GM12878 (cell line): ENCODE measurements at regions of chr2 and their contacts with region 1.

Region 1: DNA sequence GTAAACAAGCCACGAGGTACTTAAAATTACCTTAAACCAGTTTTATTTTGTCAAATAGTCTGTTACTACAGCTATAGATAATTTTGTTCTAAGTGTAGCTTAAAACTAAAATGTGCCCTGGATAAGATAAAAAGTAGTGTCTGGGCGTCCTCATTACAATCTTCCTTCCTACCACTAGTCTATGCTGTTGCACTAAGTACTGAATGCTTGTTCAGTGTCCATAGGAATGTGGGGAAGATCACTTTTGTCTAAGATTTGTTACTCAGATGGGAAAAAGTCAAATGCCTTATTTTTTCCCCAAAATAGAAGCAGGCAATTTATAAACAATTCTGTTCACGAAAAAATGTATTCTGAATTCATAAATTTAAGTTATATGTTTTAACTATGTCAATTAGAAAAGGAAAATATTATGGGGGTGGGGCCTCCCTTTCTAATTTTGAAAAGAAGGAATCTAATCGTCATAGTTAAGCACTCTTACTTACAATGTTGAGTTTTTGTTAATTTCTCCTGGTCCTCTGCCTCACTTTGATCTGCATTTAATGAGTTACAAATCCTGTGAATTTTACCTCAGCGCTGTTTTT is 140.4 kb upstream of the VRK2 start:
- DNase-seq: no peak
- ATAC-seq: peak; percentile 78
- H3K4me3 ChIP-seq: no peak overlapping the region
- H3K27ac ChIP-seq: no peak overlapping the region
- H3K4me1 ChIP-seq: peaks cover 11% of the 10 kb centered on the region; the same call in 1 of the 2 replicates
- H3K27me3 ChIP-seq: no peaks in the 10 kb centered on the region
- CTCF ChIP-seq: peak; percentile 86 to 90 (median 89); a peak in 5 of 6 replicates
- EP300 ChIP-seq: no peak
- POLR2A ChIP-seq: no peak
- RAD21 ChIP-seq: peak; percentile 100

Region 2: DNA sequence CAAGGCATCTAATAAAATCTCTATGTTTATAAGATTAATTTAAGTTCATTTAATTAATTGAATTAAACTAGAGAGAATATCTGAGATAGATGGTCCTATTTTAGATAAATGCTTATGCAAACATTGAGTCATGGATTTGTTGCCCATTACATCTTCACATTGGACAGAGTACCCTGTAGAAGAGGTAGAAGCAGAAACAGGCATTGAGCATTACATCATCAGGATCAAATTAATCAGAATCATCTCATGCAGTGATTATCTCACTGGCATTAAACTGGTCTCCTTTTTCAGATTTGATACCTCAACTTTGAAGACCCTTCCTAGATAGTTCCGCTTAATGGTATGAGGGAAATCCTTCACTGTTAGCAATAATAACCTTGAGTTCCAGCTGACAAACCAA is 329.3 kb before region 1 on chr2:
- CTCF ChIA-PET with region 1: no interaction called
- POLR2A ChIA-PET with region 1: no interaction called
- RAD21 ChIA-PET with region 1: no interaction called
- SMC1A ChIA-PET with region 1: no interaction called
- in situ Hi-C with region 1: no loop called
- intact Hi-C with region 1: no loop called
- DNase-seq: no peak
- ATAC-seq: no peak
- H3K4me3 ChIP-seq: no peak overlapping the region
- H3K27ac ChIP-seq: no peak overlapping the region
- H3K4me1 ChIP-seq: no peaks in the 10 kb centered on the region
- H3K27me3 ChIP-seq: no peaks in the 10 kb centered on the region
- CTCF ChIP-seq: no peak
- EP300 ChIP-seq: no peak
- POLR2A ChIP-seq: no peak
- RAD21 ChIP-seq: no peak

Region 3: GRCh38 chr2:57881998-57882884 is 24.0 kb before region 1 on chr2:
- CTCF ChIA-PET with region 1: interaction called, 16 read pairs
- POLR2A ChIA-PET with region 1: interaction called, 8 read pairs
- RAD21 ChIA-PET with region 1: interaction called, 74 read pairs
- SMC1A ChIA-PET with region 1: interaction called, 18 read pairs
- in situ Hi-C with region 1: no loop called
- intact Hi-C with region 1: no loop called
- DNase-seq: no peak
- ATAC-seq: peak; percentile 11
- H3K4me3 ChIP-seq: peak overlapping the region; percentile 47; the same call in 1 of the 2 replicates
- H3K27ac ChIP-seq: peak overlapping the region; percentile 74
- H3K4me1 ChIP-seq: peaks cover 39% of the 10 kb centered on the region
- H3K27me3 ChIP-seq: no peaks in the 10 kb centered on the region
- CTCF ChIP-seq: no peak
- EP300 ChIP-seq: no peak
- POLR2A ChIP-seq: no peak
- RAD21 ChIP-seq: no peak

Region 4: GRCh38 chr2:57990118-57990725 is 84.0 kb after region 1 on chr2:
- CTCF ChIA-PET with region 1: interaction called, 4 read pairs
- POLR2A ChIA-PET with region 1: interaction called, 4 read pairs
- RAD21 ChIA-PET with region 1: interaction called, 20 read pairs
- SMC1A ChIA-PET with region 1: interaction called, 6 read pairs
- in situ Hi-C with region 1: no loop called
- intact Hi-C with region 1: no loop called
- DNase-seq: peak; percentile 30
- ATAC-seq: peak; percentile 96
- H3K4me3 ChIP-seq: no peak overlapping the region
- H3K27ac ChIP-seq: no peak overlapping the region
- H3K4me1 ChIP-seq: no peaks in the 10 kb centered on the region
- H3K27me3 ChIP-seq: no peaks in the 10 kb centered on the region
- CTCF ChIP-seq: no peak
- EP300 ChIP-seq: 0 out of 4 replicates have a peak, but pooled peaks of 1 of the 2 experiments have one; percentile 35
- POLR2A ChIP-seq: no peak
- RAD21 ChIP-seq: 0 out of 2 replicates have a peak, but pooled peaks have one; percentile 0

Region 5: GRCh38 chr2:58006256-58006951 is 100.2 kb after region 1 on chr2:
- CTCF ChIA-PET with region 1: no interaction called
- POLR2A ChIA-PET with region 1: no interaction called
- RAD21 ChIA-PET with region 1: no interaction called
- SMC1A ChIA-PET with region 1: no interaction called
- in situ Hi-C with region 1: no loop called
- intact Hi-C with region 1: no loop called
- DNase-seq: no peak
- ATAC-seq: peak; percentile 94
- H3K4me3 ChIP-seq: no peak overlapping the region
- H3K27ac ChIP-seq: peak overlapping the region; percentile 13; the same call in 1 of the 2 replicates
- H3K4me1 ChIP-seq: no peaks in the 10 kb centered on the region
- H3K27me3 ChIP-seq: no peaks in the 10 kb centered on the region
- CTCF ChIP-seq: no peak
- EP300 ChIP-seq: no peak
- POLR2A ChIP-seq: no peak
- RAD21 ChIP-seq: no peak

Region 6: GRCh38 chr2:58046585-58047372 is 140.5 kb after region 1 on chr2 and contains the start of gene VRK2:
- CTCF ChIA-PET with region 1: interaction called, 15 read pairs
- POLR2A ChIA-PET with region 1: interaction called, 31 read pairs
- RAD21 ChIA-PET with region 1: interaction called, 54 read pairs
- SMC1A ChIA-PET with region 1: interaction called, 64 read pairs
- in situ Hi-C with region 1: no loop called
- intact Hi-C with region 1: loop called (anchors 1 kb)
- DNase-seq: peak; percentile 87
- ATAC-seq: peak; percentile 83
- H3K4me3 ChIP-seq: peak within 1 kb of the TSS; percentile 69
- H3K27ac ChIP-seq: peak within 1 kb of the TSS; percentile 92
- H3K4me1 ChIP-seq: peaks cover 15% of the 10 kb centered on the region; the same call in 1 of the 2 replicates
- H3K27me3 ChIP-seq: no peaks in the 10 kb centered on the region
- CTCF ChIP-seq: 0 out of 6 replicates have a peak, but pooled peaks of 2 of the 3 experiments have one; percentile 3 to 4
- EP300 ChIP-seq: peak in 1 of 2 experiments; percentile 54; a peak in 2 of 4 replicates
- POLR2A ChIP-seq: peak; percentile 92
- RAD21 ChIP-seq: peak; percentile 26; the same call in 1 of the 2 replicates
- polyA plus RNA-seq, gene VRK2: 26.5 to 32.1 TPM

Region 7: DNA sequence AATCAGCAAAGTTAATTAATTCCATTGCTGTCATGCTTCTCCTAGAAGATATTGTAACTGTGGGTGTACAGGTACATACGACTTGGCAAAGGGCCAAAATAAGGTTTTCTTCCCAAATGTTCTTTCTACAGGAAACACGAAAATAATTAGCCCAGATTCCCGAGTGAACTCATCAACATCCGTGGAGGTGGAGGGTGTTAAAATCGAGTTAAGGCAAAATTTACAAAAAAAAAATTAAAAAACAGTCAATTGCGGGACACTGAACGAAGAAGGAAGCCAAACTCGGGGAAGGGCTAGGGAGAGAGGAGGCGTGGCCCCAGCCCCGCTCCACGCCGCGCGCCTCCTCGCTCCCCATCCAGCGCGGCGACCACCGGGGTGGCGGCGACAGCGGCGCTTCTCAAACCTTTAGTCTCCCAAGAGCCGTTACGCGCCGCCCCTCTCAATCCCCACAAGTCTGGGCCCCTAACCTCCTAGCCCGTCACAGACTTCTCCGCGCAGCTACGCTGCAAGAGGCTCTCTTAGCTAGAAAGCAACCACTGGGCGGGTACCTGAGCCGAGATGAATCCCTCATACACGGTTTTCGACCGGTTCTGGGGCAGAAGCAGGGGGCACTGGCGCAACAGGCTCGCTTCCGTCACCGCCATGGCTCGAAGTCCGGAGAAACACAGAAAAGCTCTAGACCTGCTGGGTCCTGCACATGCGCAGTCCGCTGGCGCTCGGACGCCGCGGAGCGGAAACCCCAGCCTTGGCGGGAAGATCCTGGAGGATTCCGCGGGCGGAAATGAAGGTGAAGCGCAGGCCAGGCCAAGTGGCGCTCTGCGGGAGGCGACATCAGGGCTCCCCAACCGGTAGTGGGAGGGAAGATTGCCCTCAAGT is 334.7 kb after region 1 on chr2 and contains the start of gene FANCL:
- CTCF ChIA-PET with region 1: interaction called, 6 read pairs
- POLR2A ChIA-PET with region 1: no interaction called
- RAD21 ChIA-PET with region 1: interaction called, 9 read pairs
- SMC1A ChIA-PET with region 1: interaction called, 9 read pairs
- in situ Hi-C with region 1: loop called (anchors 5 kb)
- intact Hi-C with region 1: loop called (anchors 2 kb)
- DNase-seq: peak; percentile 69
- ATAC-seq: peak; percentile 64
- H3K4me3 ChIP-seq: peak within 1 kb of the TSS; percentile 90
- H3K27ac ChIP-seq: peak within 1 kb of the TSS; percentile 97
- H3K4me1 ChIP-seq: peaks cover 4% of the 10 kb centered on the region
- H3K27me3 ChIP-seq: no peaks in the 10 kb centered on the region
- CTCF ChIP-seq: no peak
- EP300 ChIP-seq: no peak
- POLR2A ChIP-seq: peak; percentile 95
- RAD21 ChIP-seq: no peak
- polyA plus RNA-seq, gene FANCL: 69.1 to 74.9 TPM

Region 8: DNA sequence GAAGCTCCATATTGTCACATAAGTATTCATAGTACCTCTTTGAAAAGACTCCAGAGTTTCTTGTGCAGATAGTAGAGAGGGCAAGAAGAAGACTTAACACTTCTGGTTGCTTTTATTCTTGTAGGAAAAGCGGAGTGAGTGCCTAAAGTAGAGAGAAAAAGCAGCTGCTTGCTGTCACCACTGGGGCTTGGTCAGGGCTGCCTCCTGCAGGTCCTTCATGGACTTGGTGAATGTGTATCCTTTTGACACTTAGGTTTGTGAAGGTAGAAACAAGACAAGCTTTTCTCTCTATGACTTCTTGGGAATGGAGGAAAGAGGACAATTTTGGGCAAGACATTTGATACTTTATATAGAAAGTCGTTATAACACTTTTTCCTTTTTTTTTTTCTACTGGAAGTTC is 647.7 kb after region 1 on chr2:
- CTCF ChIA-PET with region 1: interaction called, 7 read pairs
- POLR2A ChIA-PET with region 1: no interaction called
- RAD21 ChIA-PET with region 1: interaction called, 7 read pairs
- SMC1A ChIA-PET with region 1: interaction called, 6 read pairs
- in situ Hi-C with region 1: no loop called
- intact Hi-C with region 1: loop called (anchors 5 kb)
- DNase-seq: no peak
- ATAC-seq: peak; percentile 59; the same call in 2 of the 3 replicates
- H3K4me3 ChIP-seq: no peak overlapping the region
- H3K27ac ChIP-seq: no peak overlapping the region
- H3K4me1 ChIP-seq: no peaks in the 10 kb centered on the region
- H3K27me3 ChIP-seq: peaks cover 0 to 7% of the 10 kb centered on the region in 2 experiments; a peak in 1 of 4 replicates
- CTCF ChIP-seq: peak; percentile 22 to 46 (median 25); a peak in 3 of 6 replicates
- EP300 ChIP-seq: no peak
- POLR2A ChIP-seq: no peak
- RAD21 ChIP-seq: peak; percentile 59

Region 9: GRCh38 chr2:58710795-58711279 is 804.6 kb after region 1 on chr2:
- CTCF ChIA-PET with region 1: no interaction called
- POLR2A ChIA-PET with region 1: no interaction called
- RAD21 ChIA-PET with region 1: no interaction called
- SMC1A ChIA-PET with region 1: no interaction called
- in situ Hi-C with region 1: no loop called
- intact Hi-C with region 1: no loop called
- DNase-seq: no peak
- ATAC-seq: no peak
- H3K4me3 ChIP-seq: no peak overlapping the region
- H3K27ac ChIP-seq: no peak overlapping the region
- H3K4me1 ChIP-seq: no peaks in the 10 kb centered on the region
- H3K27me3 ChIP-seq: no peaks in the 10 kb centered on the region
- CTCF ChIP-seq: no peak
- EP300 ChIP-seq: no peak
- POLR2A ChIP-seq: no peak
- RAD21 ChIP-seq: no peak